ENCODE measurements at regions of chr15 and their contacts with region 1.

Region 1: DNA sequence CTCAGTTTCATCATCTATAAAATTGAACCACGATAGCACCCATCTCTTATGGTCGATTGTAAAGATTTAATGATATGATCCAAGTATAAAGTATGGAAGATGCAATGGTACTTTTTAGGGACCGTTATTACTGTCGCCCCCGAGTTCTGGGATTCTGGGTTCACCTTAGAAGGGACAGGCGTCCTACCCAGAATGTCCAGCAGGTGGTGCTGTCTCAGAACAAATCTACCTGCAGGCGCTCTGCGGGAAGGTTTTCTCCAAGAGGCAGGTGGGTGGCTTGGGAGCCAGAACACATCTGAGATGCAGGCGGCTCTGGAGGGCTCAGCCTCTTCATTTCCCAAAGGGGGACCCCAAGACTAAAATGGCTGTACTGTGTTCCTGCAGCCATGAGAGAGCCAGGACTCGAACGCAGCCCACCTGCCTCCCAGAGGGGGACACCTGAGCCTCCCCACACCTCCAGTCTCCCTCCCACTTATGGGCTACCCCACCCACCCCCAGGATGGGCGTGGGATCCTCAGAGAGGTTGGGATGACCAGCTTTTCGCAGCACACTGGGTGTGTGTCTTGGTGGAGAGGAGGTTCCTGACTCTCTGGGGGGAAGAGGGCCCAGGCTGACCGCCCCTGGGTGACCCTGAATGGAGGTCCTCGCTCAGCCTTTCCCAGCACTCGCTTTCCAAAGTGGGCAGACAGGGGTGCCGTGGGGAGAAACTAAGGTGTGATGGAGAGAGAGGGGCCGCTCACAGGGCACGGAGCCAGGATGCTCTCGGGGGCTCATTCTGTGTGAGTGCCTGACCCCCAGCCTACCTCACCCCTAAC is 28.1 kb upstream of the CORO2B start:
- DNase-seq: peak; percentile 87
- ATAC-seq: peak; percentile 62
- H3K4me3 Mint-ChIP-seq: no peak overlapping the region
- H3K27ac Mint-ChIP-seq: no peak overlapping the region
- H3K4me1 Mint-ChIP-seq: peaks cover 3% of the 10 kb centered on the region
- H3K27me3 Mint-ChIP-seq: peaks cover 33% of the 10 kb centered on the region
- CTCF ChIP-seq: peak; percentile 90

Region 2: DNA sequence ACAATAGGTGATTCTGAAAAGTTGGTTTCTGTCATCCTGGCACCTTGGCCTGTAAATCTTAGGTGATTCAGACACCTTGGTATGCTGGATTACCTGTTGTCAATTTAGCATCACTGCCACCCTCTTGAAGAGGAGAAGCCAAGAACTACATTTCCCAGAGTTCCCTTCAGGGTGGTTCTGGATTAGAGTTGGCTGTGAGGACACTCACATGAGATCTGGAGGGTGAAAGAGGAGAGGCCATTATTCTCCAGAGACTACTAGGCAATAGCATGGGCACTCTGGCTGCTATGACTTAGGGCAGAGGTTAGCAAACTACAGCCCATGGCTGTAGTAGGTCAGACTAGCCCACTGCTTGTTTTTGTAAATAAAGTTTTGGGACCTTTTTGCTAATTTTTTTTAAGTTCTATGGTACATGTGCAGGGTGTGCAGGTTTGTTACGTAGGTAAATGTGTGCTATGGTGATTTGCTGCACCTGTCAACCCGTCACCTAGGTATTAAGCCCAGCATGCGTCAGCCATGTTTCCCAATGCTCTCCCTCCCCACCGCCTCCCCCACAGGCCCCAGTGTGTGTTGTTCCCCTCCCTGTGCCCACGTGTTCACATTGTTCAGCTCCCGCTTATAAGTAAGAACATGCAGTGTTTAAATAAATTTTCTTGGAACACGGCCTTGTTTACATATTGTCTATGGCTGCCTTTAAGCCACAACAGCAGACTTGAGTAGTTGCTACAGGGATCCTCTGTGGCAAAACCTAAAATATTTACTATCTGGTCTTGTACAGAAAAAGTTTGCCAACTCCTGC is 13.4 kb before region 1 on chr15:
- CTCF ChIA-PET with region 1: interaction called, 42 read pairs
- POLR2A ChIA-PET with region 1: interaction called, 3 read pairs
- intact Hi-C with region 1: no loop called
- DNase-seq: no peak
- ATAC-seq: no peak
- H3K4me3 Mint-ChIP-seq: no peak overlapping the region
- H3K27ac Mint-ChIP-seq: no peak overlapping the region
- H3K4me1 Mint-ChIP-seq: no peaks in the 10 kb centered on the region
- H3K27me3 Mint-ChIP-seq: peaks cover 12% of the 10 kb centered on the region
- CTCF ChIP-seq: no peak

Region 3: DNA sequence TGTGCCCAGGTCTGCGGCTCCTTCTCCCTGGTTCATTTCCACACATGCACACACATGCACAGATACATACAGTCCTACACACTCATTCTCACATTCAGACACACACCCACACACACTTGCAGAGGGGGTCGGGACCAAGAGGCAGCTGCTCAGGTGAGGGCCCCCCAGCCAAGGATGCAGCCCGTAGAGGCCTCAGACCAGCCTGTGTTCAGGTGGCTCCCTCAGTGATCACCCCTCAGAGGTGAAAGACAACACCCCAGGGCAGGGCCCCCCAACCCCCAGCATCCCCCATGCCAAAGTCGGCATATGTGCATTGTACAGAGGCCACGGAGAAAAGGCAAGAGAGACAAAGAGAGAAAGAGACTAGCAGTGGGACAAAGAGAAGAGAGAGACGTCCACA is 22.2 kb after region 1 on chr15:
- CTCF ChIA-PET with region 1: interaction called, 10 read pairs
- POLR2A ChIA-PET with region 1: interaction called, 3 read pairs
- intact Hi-C with region 1: no loop called
- DNase-seq: no peak
- ATAC-seq: no peak
- H3K4me3 Mint-ChIP-seq: no peak overlapping the region
- H3K27ac Mint-ChIP-seq: no peak overlapping the region
- H3K4me1 Mint-ChIP-seq: peaks cover 3% of the 10 kb centered on the region
- H3K27me3 Mint-ChIP-seq: peaks cover 50% of the 10 kb centered on the region
- CTCF ChIP-seq: no peak

Region 4: DNA sequence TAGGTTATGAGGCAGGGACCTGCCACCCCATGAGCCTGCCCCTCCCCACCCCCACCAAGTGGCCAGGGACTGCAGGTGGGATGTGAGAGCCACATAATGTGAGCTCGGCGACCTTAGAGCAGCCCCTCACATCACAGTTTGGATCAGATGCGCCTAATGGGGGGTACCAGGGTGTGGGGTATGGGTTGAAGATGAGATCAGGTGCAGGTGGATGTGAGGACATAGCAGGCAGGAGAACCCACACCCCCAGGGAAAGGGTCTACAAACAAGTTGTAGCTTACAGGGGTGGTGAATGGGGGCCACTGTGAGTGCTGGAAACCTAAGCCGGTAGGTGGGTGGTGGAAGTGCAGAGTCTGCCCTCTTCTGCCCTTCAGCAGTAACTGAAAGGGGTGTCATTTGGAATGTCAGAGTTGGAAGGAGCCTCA is 122.1 kb after region 1 on chr15:
- CTCF ChIA-PET with region 1: interaction called, 74 read pairs
- POLR2A ChIA-PET with region 1: no interaction called
- intact Hi-C with region 1: no loop called
- DNase-seq: no peak
- ATAC-seq: no peak
- H3K4me3 Mint-ChIP-seq: no peak overlapping the region
- H3K27ac Mint-ChIP-seq: no peak overlapping the region
- H3K4me1 Mint-ChIP-seq: peaks cover 3% of the 10 kb centered on the region
- H3K27me3 Mint-ChIP-seq: peaks cover 7% of the 10 kb centered on the region
- CTCF ChIP-seq: no peak